BJ (cell line): ENCODE measurements at regions of chr1 and their contacts with region 1.

Region 1: GRCh38 chr1:37692078-37692833 is at the start of gene CDCA8:
- DNase-seq: peak; percentile 93
- H3K4me3 ChIP-seq: peak within 1 kb of the TSS; percentile 82
- H3K27me3 ChIP-seq: no peaks in the 10 kb centered on the region
- CTCF ChIP-seq: peak; percentile 88
- polyA plus RNA-seq, gene CDCA8: 14.9 and 28.2 TPM in 2 replicates

Region 2: GRCh38 chr1:37255136-37255795 is 437.0 kb before region 1 on chr1:
- CTCF ChIA-PET with region 1: no interaction called
- POLR2A ChIA-PET with region 1: no interaction called
- DNase-seq: no peak
- H3K4me3 ChIP-seq: no peak overlapping the region
- H3K27me3 ChIP-seq: no peaks in the 10 kb centered on the region
- CTCF ChIP-seq: no peak

Region 3: DNA sequence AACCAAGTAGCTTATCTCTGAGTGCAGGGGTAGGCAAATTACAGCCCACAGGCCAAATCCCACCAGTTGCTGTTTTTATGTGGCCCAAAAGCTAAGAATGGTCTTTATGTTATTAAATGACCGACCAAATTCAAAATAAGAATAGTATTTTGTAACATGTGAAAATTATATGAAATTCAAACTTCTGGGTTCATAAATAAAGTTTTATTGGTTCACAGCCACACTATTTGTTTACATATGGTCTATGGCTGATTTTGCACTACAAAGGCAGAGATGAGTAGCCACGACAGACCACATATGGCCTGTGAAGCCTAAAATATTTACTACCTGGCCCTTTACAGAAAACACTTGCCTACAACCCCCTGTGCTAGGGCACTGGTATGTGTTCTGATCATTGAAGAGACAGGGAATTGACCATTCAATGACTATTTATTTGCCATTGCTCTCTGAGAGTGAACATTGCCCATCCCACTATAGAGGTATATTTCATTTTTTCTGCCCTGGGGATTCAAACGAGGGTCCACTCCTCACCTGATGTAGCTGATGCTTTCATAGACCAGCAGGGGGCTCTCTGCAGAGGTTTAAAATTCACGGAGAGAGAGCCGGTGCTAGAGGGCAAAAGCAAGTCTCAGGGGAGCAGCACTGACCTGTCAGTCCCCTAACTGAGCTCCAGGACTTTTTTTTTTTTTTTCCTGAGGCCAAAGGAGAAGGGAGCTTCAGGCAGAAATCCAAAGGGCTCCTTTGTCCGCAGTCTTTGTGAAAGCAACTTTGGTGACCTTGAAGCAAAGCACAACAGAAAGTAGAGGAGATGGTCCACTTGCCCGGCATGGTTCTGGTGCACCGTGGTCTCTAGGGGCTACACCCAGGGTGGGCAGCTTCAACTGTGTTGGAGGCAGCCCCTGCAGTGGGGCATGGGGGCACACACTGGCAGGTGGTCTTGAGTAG is 89.2 kb before region 1 on chr1:
- CTCF ChIA-PET with region 1: interaction called, 214 read pairs
- POLR2A ChIA-PET with region 1: no interaction called
- DNase-seq: no peak
- H3K4me3 ChIP-seq: no peak overlapping the region
- H3K27me3 ChIP-seq: peaks cover 4% of the 10 kb centered on the region
- CTCF ChIP-seq: peak; percentile 77

Region 4: GRCh38 chr1:37776946-37777516 is 84.8 kb after region 1 on chr1:
- CTCF ChIA-PET with region 1: no interaction called
- POLR2A ChIA-PET with region 1: no interaction called
- DNase-seq: no peak
- H3K4me3 ChIP-seq: no peak overlapping the region
- H3K27me3 ChIP-seq: peaks cover 4% of the 10 kb centered on the region
- CTCF ChIP-seq: no peak

Region 5: GRCh38 chr1:37807555-37808368 is 115.5 kb after region 1 on chr1 and contains the starts of genes C1orf122 and YRDC:
- CTCF ChIA-PET with region 1: interaction called, 8 read pairs
- POLR2A ChIA-PET with region 1: interaction called, 10 read pairs
- DNase-seq: no peak
- H3K4me3 ChIP-seq: peak within 1 kb of the TSS; percentile 68
- H3K27me3 ChIP-seq: no peaks in the 10 kb centered on the region
- CTCF ChIP-seq: no peak
- polyA plus RNA-seq, gene C1orf122: 30.9 and 34.1 TPM in 2 replicates
- polyA plus RNA-seq, gene YRDC: 15.1 and 19.8 TPM in 2 replicates